Transverse colon (tissue), 4 donors: ENCODE measurements at regions of chr4 and their contacts with region 1.

Region 1: GRCh38 chr4:168710353-168710946 is 213.6 kb downstream of the PALLD start:
- DNase-seq: peak; percentile 35
- H3K4me3 ChIP-seq: no peak overlapping the region
- H3K27ac ChIP-seq: peak overlapping the region; percentile 65 to 81 (median 74)
- H3K4me1 ChIP-seq: peaks cover 0 to 18% (median 8%) of the 10 kb centered on the region in 4 donors
- H3K27me3 ChIP-seq: no peaks in the 10 kb centered on the region
- CTCF ChIP-seq: peak; percentile 41 to 58 (median 53)
- EP300 ChIP-seq: no peak
- POLR2A ChIP-seq: no peak

Region 2: DNA sequence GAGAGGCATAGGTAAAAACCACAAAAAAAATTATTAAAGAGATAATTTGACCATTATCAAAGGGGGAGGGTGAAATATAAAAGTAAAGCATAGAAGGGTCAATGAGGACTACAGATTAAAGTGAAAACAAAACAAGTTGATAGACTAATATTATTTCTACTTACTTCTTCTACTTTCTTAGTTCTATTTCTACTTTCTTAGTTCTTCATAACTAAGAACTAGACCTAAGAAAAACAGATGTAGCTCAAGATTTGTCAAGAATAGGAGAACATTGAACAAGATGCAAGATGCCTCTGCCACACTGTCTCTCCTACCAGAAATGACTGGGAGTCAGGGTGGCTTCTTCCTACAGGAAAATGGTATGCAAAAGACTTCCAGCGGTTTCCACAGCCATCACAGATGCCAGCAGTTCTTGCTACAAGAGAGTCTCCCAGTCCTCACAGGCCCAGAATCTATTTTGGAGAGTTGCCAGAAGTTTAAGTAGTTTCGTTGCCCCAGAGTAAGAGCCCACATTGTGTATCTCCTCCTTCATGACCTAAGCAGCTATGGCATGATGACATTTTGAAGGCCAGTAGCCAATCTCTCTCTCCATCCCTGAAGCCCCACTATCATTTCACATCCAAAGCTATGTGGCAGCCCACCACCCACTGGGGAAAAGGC is 349.0 kb before region 1 on chr4:
- in situ Hi-C with region 1: no loop called
- intact Hi-C with region 1: no loop called
- DNase-seq: no peak
- H3K4me3 ChIP-seq: no peak overlapping the region
- H3K27ac ChIP-seq: no peak overlapping the region
- H3K4me1 ChIP-seq: no peaks in the 10 kb centered on the region
- H3K27me3 ChIP-seq: no peaks in the 10 kb centered on the region
- CTCF ChIP-seq: no peak
- EP300 ChIP-seq: no peak
- POLR2A ChIP-seq: no peak

Region 3: DNA sequence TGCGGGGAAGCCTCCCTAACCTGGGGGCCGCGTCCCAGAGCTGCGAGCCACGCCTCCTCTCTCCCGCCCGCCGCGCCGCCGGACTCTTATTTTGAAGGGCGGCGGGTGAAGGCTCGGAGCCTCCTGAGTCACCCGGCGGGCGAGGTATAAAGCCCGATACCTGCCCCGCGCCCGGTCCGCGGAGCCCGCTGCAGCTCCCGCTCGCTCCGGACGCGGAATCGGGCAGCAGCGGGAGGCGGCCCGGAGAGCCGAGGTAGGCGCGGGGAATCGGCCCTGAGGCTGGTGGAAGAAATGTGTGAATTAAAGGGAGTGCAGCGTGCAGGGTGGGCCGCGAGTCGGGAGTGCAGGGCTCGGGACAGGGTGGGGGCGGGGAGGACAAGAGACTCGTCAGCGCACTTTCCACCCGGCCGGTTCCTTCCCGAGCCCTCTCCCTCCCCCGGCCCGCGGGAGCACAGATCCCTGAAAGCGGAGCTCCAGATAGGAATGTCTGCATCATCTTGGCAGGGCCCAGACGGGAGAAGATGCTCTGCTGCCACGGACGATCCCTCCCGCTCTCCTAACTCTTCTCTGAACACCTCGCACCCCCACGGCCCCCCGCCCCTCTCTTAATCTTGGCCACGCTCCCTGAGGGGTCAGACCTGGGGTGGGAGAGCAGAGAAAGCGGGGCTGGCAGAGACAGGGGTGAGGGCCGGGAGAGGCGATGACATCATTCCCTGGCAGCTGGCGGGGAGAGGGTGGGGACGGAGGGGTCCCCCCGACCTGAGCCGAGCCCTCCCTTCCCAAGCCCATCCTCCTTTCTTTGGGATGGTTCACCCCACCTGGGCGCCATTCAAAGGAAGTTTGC is 121.7 kb after region 1 on chr4:
- in situ Hi-C with region 1: no loop called
- intact Hi-C with region 1: loop called (anchors 10 kb)
- DNase-seq: peak; percentile 85
- H3K4me3 ChIP-seq: peak overlapping the region; percentile 63 to 85 (median 75)
- H3K27ac ChIP-seq: peak overlapping the region; percentile 90 to 93 (median 92)
- H3K4me1 ChIP-seq: peaks cover 0 to 14% (median 8%) of the 10 kb centered on the region in 4 donors
- H3K27me3 ChIP-seq: peaks cover 4% of the 10 kb centered on the region
- CTCF ChIP-seq: no peak
- EP300 ChIP-seq: no peak
- POLR2A ChIP-seq: peak; percentile 89

Region 4: DNA sequence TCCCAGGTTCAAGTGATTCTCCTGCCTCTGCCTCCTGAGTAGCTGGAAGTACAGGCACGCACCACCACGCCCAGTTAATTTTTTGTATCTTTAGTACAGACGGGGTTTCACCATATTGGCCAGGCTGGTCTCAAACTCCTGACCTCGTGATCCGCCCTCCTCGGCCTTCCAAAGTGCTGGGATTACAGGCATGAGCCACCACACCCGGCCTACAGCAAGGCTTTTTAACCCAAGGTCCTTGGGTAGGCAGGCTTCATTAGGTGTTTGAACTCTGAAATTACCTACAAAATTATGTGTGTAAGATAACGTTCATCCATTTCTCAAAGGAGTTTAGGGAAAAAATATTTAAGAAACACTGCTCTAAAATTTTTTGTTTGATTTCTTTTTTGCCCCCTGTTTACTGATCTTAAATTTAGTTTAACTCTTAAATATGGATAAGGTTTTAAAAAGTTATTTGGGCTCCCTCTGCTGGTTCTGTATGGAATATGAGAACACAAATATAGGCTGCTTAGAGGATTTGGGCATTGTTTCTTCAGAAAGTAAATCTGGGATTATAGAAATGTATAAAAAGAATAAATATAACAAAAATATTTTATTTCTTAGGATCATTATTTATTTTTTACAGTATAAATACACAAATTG is 206.8 kb after region 1 on chr4:
- in situ Hi-C with region 1: loop called in 3 of 4 experiments (anchors 5 to 25 kb)
- intact Hi-C with region 1: loop called (anchors 5 kb)
- DNase-seq: no peak
- H3K4me3 ChIP-seq: no peak overlapping the region
- H3K27ac ChIP-seq: peak overlapping the region in 3 of 4 donors; percentile 23 to 50 (median 28)
- H3K4me1 ChIP-seq: peaks cover 0 to 3% (median 0%) of the 10 kb centered on the region in 4 donors
- H3K27me3 ChIP-seq: no peaks in the 10 kb centered on the region
- CTCF ChIP-seq: peak; percentile 50 to 62 (median 54)
- EP300 ChIP-seq: no peak
- POLR2A ChIP-seq: no peak

Region 5: DNA sequence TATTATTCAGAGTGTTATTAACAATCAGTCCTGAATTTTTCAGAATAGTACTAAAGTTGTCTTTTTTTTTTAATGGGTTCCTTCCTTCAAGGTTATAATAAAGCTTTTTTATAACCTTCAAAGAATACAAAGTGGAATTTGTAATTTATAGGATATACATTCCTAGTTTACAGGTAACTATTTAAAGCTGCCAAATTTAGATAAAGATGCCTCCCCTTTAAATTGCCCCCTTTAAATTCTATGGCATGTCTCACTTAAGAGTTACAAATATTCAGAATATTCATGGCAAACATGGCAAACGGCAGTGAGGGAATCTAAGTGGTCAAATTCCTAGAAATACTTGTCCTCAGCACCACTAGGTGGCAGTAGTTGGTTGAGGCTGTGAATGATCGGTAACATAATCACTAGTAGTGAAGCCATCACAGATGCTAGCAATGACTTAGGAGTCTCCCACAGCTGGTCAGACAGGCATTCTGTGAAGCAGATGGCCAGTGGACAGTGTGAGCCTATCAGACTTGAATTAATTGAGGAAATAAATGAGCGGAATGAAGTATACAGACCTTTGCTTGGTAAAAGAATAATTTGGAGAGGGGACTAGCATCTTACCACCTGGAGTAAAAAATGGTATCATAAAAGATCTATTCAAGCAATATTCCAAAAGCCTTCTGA is 213.2 kb after region 1 on chr4:
- in situ Hi-C with region 1: loop called in 3 of 4 experiments (anchors 5 to 25 kb)
- intact Hi-C with region 1: loop called (anchors 5 kb)
- DNase-seq: peak; percentile 54
- H3K4me3 ChIP-seq: no peak overlapping the region
- H3K27ac ChIP-seq: peak overlapping the region in 2 of 4 donors; percentile 6 to 18
- H3K4me1 ChIP-seq: no peaks in the 10 kb centered on the region
- H3K27me3 ChIP-seq: no peaks in the 10 kb centered on the region
- CTCF ChIP-seq: peak; percentile 66 to 82 (median 73)
- EP300 ChIP-seq: no peak
- POLR2A ChIP-seq: no peak